Lower leg skin (tissue), 4 donors: ENCODE measurements at regions of chr14 and their contacts with region 1.

Region 1: DNA sequence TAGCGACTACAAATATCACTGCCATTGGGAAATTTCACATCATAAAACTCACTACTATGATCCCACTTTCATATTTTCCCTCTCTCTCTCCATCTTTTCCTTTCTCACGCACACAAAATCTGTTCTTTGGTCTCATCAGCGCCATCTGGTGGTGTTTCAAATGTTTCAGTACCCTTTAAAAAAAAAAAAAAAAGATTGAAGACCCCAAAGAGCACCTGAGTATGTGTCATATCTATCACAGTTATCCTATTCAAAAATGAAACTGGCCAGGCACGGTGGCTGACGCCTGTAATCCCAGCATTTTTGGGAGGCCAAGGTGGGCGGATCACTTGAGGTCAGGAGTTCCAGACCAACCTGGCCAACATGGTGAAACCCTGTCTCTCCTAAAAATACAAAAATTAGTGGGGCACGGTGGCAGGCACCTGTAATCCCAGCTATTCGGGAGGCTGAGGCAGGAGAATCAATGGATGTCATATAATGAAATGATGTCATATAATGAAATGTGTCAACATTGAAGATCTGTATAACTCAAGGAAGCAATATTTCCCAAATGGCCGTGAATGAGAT is 72.4 kb downstream of the TTC9 start:
- DNase-seq: no peak
- H3K4me3 ChIP-seq: no peak overlapping the region
- CTCF ChIP-seq: no peak
- POLR2A ChIP-seq: no peak

Region 2: DNA sequence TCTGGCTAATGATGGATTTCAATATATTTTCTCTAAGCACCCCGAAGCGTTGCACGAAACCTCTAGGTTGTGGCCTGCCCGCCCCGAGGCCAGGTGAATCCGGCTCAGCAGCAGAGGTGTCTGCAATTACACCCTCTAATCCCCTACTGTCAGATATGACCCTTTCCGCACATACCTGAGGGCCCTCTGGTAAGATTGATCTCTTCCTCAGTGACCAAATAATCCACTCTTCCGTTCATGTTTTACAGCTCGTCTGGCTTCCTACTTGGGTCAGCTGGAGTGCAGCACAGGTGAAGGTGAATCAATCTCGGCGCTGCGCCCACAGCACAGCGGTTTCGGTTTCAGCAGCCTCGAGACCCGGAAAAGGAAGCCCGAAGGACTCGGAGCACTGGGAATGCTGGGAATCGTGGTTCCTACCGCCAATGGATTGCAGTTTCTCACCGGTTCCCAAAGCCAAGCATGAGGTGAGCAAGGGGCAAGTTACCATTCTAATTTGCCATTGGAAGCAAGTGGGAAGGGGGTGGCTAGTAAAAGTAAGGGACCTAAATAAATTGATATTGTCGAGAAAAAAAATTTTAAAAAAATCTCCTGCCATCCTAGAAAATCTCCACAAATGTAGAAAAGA is 297.3 kb before region 1 on chr14 and contains the start of gene SYNJ2BP:
- intact Hi-C with region 1: no loop called
- DNase-seq: peak; percentile 65 to 92
- H3K4me3 ChIP-seq: peak within 1 kb of the TSS; percentile 55
- CTCF ChIP-seq: no peak
- POLR2A ChIP-seq: no peak
- total RNA-seq, gene SYNJ2BP: 5.9 to 14.5 (median 10.5) TPM

Region 3: GRCh38 chr14:70665191-70665916 is 48.8 kb before region 1 on chr14:
- intact Hi-C with region 1: loop called (anchors 10 kb)
- DNase-seq: peak in 1 of 2 donors; percentile 52
- H3K4me3 ChIP-seq: no peak overlapping the region
- CTCF ChIP-seq: no peak
- POLR2A ChIP-seq: no peak